A673 (cell line): ENCODE measurements at regions of chr1 and their contacts with region 1.

Region 1: GRCh38 chr1:201268604-201269151 is 14.6 kb upstream of the PKP1 start:
- DNase-seq: peak; percentile 74
- H3K4me3 ChIP-seq: no peak overlapping the region
- H3K27ac ChIP-seq: peak overlapping the region; percentile 99
- H3K4me1 ChIP-seq: peaks cover 83% of the 10 kb centered on the region
- H3K27me3 ChIP-seq: no peaks in the 10 kb centered on the region
- CTCF ChIP-seq: no peak

Region 2: DNA sequence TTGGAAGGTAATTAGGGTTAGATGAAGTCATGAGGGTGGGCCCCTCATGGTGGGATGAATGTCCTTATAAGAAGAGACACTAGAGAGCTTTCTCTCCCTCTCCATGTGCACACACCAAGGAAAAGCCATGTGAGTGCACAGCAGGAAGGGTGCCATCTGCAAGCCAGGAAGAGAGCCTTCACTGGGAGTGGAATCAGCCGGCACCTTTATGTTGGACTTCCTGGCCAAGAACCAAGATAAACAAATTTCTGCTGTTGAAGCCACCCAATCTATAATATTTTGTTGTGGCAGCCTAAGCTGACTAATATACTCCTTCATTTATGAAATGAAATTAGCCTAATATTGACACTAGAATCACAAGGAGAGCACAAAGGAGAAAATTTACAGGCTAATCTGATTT is 23.6 kb before region 1 on chr1:
- CTCF ChIA-PET with region 1: no interaction called
- POLR2A ChIA-PET with region 1: no interaction called
- intact Hi-C with region 1: no loop called
- DNase-seq: no peak
- H3K4me3 ChIP-seq: no peak overlapping the region
- H3K27ac ChIP-seq: no peak overlapping the region
- H3K4me1 ChIP-seq: peaks cover 9% of the 10 kb centered on the region
- H3K27me3 ChIP-seq: no peaks in the 10 kb centered on the region
- CTCF ChIP-seq: no peak

Region 3: DNA sequence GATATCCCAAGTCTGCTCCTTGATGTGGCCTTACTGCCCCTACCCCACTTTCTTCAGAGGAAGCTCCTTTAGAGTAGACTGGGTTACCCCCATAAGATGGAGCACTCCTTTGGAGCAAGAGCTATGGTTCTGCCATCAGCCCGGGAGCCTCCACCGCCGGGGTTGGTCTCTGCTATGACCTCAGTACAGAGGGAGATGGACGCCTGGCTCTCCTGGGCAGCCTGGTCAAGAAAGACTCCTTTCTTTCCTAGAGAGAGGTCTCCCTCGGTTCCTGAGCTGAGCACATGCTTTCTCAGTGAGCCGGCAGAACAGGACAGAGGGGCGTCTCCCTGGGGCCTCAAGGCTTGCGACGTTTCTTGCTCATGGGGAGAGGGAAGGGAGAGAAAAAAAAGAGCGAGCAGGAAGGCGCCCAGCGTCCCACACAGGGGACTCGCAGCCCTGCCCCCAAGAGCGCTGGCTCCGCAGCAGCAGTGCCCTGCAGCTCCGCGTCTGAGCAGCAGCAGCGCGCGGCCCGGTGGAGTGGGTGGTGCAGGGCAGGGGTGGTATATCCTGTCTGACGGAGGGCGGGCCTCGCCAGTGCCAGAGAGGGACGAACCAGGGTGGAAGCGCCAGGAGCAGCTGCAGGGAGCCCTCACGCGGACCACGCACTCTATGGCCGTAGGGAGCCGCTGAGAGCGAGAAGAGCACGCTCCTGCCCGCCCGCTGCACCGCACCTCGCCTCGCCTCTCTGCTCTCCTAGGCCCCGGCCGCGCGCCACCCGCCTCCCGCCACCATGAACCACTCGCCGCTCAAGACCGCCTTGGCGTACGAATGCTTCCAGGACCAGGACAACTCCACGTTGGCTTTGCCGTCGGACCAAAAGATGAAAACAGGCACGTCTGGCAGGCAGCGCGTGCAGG is 14.5 kb after region 1 on chr1 and contains the start of gene PKP1:
- CTCF ChIA-PET with region 1: interaction called, 3 read pairs
- POLR2A ChIA-PET with region 1: interaction called, 9 read pairs
- intact Hi-C with region 1: loop called (anchors 1 kb)
- DNase-seq: peak; percentile 98
- H3K4me3 ChIP-seq: peak within 1 kb of the TSS; percentile 94
- H3K27ac ChIP-seq: peak within 1 kb of the TSS; percentile 96
- H3K4me1 ChIP-seq: peaks cover 46% of the 10 kb centered on the region
- H3K27me3 ChIP-seq: no peaks in the 10 kb centered on the region
- CTCF ChIP-seq: no peak
- total RNA-seq, gene PKP1: 492 and 535 TPM in 2 replicates

Region 4: DNA sequence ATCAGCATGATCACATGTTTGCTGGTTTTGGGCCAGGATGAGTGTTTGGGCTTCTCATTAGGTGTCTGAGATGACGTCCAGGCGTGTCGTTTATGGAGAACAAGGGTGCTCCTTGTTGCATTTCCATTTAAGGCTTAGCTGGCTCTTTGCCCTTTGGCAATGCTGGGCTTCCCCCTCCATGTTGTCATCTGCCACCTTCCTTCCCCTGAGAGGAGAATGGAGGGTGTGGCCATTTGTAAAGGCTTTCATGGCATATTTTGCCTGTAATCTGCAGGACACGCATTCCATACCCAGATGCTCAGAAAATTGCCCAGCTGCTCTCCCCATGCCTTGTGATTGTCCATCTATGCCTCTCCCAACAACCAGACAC is 42.3 kb after region 1 on chr1:
- CTCF ChIA-PET with region 1: interaction called, 5 read pairs
- POLR2A ChIA-PET with region 1: no interaction called
- intact Hi-C with region 1: loop called (anchors 1 kb)
- DNase-seq: peak; percentile 94
- H3K4me3 ChIP-seq: no peak overlapping the region
- H3K27ac ChIP-seq: peak overlapping the region; percentile 94
- H3K4me1 ChIP-seq: peaks cover 79% of the 10 kb centered on the region
- H3K27me3 ChIP-seq: no peaks in the 10 kb centered on the region
- CTCF ChIP-seq: no peak

Region 5: DNA sequence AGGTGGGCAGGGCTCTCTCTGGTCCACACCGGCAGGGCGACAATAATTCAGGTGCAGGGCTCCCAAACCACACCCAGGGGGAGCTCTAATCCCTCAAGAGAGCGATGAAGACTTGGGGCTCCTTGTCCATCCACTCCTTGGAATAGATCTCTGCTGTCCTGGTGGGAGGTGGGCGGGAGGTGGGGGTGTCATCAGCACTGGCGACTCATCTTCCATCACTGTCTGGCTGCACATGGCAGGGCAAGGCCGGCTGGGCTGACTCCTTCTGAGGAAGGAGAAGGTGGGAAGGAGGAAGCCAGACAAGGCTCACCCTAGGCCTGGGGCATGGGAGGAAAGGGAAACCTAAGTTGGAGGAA is 79.5 kb after region 1 on chr1:
- CTCF ChIA-PET with region 1: no interaction called
- POLR2A ChIA-PET with region 1: no interaction called
- intact Hi-C with region 1: loop called (anchors 5 kb)
- DNase-seq: peak; percentile 87
- H3K4me3 ChIP-seq: no peak overlapping the region
- H3K27ac ChIP-seq: no peak overlapping the region
- H3K4me1 ChIP-seq: peaks cover 26% of the 10 kb centered on the region
- H3K27me3 ChIP-seq: no peaks in the 10 kb centered on the region
- CTCF ChIP-seq: peak; percentile 86

Region 6: GRCh38 chr1:201877877-201878401 is 609.3 kb after region 1 on chr1:
- CTCF ChIA-PET with region 1: no interaction called
- POLR2A ChIA-PET with region 1: no interaction called
- intact Hi-C with region 1: no loop called
- DNase-seq: peak; percentile 72
- H3K4me3 ChIP-seq: no peak overlapping the region
- H3K27ac ChIP-seq: no peak overlapping the region
- H3K4me1 ChIP-seq: no peaks in the 10 kb centered on the region
- H3K27me3 ChIP-seq: no peaks in the 10 kb centered on the region
- CTCF ChIP-seq: peak; percentile 69